ENCODE measurements at regions of chr1 and their contacts with region 1.

Region 1: DNA sequence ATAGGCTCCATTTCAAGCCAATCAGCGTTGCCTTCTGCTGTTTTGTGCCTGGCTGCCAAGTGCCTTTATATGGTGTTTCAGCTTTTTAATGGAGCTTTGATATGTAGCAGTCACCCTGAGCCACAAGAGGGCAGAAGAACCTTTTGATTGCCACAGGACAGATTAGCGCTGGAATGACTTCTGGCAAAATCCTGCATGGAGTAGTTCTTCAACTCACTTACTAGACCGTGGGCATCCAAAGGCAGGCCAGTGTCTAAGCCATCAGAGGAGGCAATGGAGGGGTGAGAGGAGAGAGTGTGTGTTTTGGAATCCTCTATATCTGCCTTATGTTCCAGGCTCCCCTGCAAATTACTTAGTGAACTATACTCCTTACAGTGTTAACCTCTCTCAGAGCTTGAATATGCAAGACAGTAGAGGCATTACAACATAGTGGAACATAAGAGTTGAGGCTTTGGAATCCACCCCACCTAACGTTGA is 56.2 kb downstream of the ST3GAL3 start:
- DNase-seq: peak; percentile 93
- ATAC-seq: peak; percentile 98
- H3K4me3 ChIP-seq: no peak overlapping the region
- H3K27ac ChIP-seq: no peak overlapping the region
- H3K4me1 ChIP-seq: peaks cover 7% of the 10 kb centered on the region
- H3K27me3 ChIP-seq: no peaks in the 10 kb centered on the region
- CTCF ChIP-seq: peak; percentile 97
- POLR2A ChIP-seq: 0 out of 2 replicates have a peak, but pooled peaks have one; percentile 46
- RAD21 ChIP-seq: peak; percentile 100

Region 2: DNA sequence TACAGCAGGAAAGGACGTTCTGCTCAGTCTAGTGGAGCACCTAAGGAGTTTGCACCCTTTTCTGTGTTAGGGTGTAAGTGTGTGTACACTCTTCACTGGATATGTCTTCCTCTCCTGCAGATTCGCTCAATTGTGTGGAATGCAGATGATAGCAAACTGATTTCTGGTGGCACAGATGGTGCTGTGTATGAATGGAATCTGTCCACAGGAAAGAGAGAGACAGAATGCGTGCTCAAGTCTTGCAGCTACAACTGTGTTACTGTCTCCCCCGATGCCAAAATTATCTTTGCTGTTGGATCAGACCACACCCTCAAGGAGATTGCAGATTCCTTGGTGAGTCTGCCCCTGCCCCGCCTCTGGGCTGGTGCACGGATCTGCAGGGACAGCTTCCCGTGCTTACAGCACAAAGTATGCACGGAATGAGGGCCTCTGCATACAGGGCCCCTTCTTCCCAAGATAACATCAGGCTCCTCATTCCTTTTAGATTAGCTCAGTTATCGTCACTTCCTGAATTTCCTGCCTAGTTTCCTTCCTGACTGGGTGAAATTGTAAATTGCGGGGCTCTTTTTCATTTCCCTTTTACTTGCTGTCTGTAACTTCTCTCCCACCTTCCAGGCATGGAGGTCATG is 556.8 kb before region 1 on chr1:
- CTCF ChIA-PET with region 1: no interaction called
- POLR2A ChIA-PET with region 1: no interaction called
- dilution Hi-C with region 1: no loop called
- in situ Hi-C with region 1: no loop called
- intact Hi-C with region 1: no loop called
- DNase-seq: peak; percentile 98
- ATAC-seq: peak; percentile 96
- H3K4me3 ChIP-seq: peak overlapping the region; percentile 31; the same call in 1 of the 2 replicates
- H3K27ac ChIP-seq: peak overlapping the region; percentile 97
- H3K4me1 ChIP-seq: peaks cover 18% of the 10 kb centered on the region
- H3K27me3 ChIP-seq: no peaks in the 10 kb centered on the region
- CTCF ChIP-seq: no peak
- POLR2A ChIP-seq: peak; percentile 62; the same call in 1 of the 2 replicates
- RAD21 ChIP-seq: peak; percentile 17; the same call in 1 of the 2 replicates

Region 3: DNA sequence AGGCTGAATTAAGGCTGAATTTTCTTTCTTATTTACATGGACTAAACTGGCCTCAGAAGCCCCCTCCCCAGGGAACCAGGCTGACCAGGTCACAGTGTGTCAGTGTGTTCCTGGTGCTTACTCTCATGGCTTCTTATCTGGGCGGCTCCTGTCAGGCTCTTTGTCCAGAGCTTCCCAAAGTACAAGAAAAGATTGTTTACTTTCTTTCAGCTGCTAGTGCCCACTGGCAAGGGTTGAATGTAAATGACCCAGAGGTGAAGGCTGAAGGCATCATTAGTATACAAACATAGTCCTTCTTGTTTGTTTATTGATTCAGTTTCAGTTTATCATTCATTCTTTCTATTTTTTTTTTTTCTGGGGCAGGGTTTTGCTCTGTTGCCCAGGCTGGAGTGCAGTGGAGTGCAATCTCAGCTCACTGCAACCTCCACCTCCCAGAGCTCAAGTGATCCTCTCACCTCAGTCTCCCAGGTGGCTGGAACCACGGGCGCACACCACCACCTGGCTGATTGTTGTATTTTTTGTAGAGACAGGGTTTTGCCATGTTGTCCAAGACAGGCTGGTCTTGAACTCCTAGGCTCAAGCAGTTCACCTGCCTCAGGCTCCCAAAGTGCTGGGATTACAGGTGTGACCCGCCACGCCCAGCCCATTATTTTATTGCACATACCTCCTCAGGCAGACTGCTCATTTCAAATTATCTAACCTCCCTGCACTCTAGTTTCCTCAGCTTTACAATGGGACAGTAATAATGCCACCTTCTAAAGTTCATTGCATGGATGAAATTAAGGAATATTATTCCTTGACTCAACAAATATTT is 123.4 kb before region 1 on chr1:
- CTCF ChIA-PET with region 1: no interaction called
- POLR2A ChIA-PET with region 1: no interaction called
- dilution Hi-C with region 1: no loop called
- in situ Hi-C with region 1: no loop called
- intact Hi-C with region 1: no loop called
- DNase-seq: no peak
- ATAC-seq: no peak
- H3K4me3 ChIP-seq: no peak overlapping the region
- H3K27ac ChIP-seq: no peak overlapping the region
- H3K4me1 ChIP-seq: peaks cover 2% of the 10 kb centered on the region; the same call in 1 of the 2 replicates
- H3K27me3 ChIP-seq: no peaks in the 10 kb centered on the region
- CTCF ChIP-seq: no peak
- POLR2A ChIP-seq: no peak
- RAD21 ChIP-seq: no peak

Region 4: GRCh38 chr1:43818691-43819090 is 55.2 kb after region 1 on chr1:
- CTCF ChIA-PET with region 1: no interaction called
- POLR2A ChIA-PET with region 1: no interaction called
- dilution Hi-C with region 1: no loop called
- in situ Hi-C with region 1: no loop called
- intact Hi-C with region 1: loop called (anchors 2 kb)
- DNase-seq: no peak
- ATAC-seq: no peak
- H3K4me3 ChIP-seq: no peak overlapping the region
- H3K27ac ChIP-seq: no peak overlapping the region
- H3K4me1 ChIP-seq: peaks cover 2% of the 10 kb centered on the region; the same call in 1 of the 2 replicates
- H3K27me3 ChIP-seq: no peaks in the 10 kb centered on the region
- CTCF ChIP-seq: no peak
- POLR2A ChIP-seq: no peak
- RAD21 ChIP-seq: no peak

Region 5: GRCh38 chr1:43946236-43947060 is 182.9 kb after region 1 on chr1 and contains the start of gene IPO13:
- CTCF ChIA-PET with region 1: interaction called, 10 read pairs
- POLR2A ChIA-PET with region 1: no interaction called
- dilution Hi-C with region 1: no loop called
- in situ Hi-C with region 1: no loop called
- intact Hi-C with region 1: loop called (anchors 1 kb)
- DNase-seq: peak; percentile 94
- ATAC-seq: peak; percentile 97
- H3K4me3 ChIP-seq: peak within 1 kb of the TSS; percentile 67
- H3K27ac ChIP-seq: peak within 1 kb of the TSS; percentile 97
- H3K4me1 ChIP-seq: peaks cover 15% of the 10 kb centered on the region
- H3K27me3 ChIP-seq: no peaks in the 10 kb centered on the region
- CTCF ChIP-seq: peak; percentile 66
- POLR2A ChIP-seq: peak; percentile 72
- RAD21 ChIP-seq: peak; percentile 59
- total RNA-seq, gene IPO13: 14.2 and 15.2 TPM in 2 replicates

Region 6: GRCh38 chr1:44036409-44037139 is 273.0 kb after region 1 on chr1:
- CTCF ChIA-PET with region 1: interaction called, 5 read pairs
- POLR2A ChIA-PET with region 1: no interaction called
- dilution Hi-C with region 1: no loop called
- in situ Hi-C with region 1: no loop called
- intact Hi-C with region 1: loop called (anchors 1 kb)
- DNase-seq: peak; percentile 61
- ATAC-seq: peak; percentile 80
- H3K4me3 ChIP-seq: no peak overlapping the region
- H3K27ac ChIP-seq: no peak overlapping the region
- H3K4me1 ChIP-seq: peaks cover 7% of the 10 kb centered on the region; the same call in 1 of the 2 replicates
- H3K27me3 ChIP-seq: no peaks in the 10 kb centered on the region
- CTCF ChIP-seq: peak; percentile 73
- POLR2A ChIP-seq: no peak
- RAD21 ChIP-seq: peak; percentile 81

Measured in IMR-90 (cell line).